Mammary epithelial cell (primary cell): ENCODE measurements at regions of chr1 and their contacts with region 1.

Region 1: DNA sequence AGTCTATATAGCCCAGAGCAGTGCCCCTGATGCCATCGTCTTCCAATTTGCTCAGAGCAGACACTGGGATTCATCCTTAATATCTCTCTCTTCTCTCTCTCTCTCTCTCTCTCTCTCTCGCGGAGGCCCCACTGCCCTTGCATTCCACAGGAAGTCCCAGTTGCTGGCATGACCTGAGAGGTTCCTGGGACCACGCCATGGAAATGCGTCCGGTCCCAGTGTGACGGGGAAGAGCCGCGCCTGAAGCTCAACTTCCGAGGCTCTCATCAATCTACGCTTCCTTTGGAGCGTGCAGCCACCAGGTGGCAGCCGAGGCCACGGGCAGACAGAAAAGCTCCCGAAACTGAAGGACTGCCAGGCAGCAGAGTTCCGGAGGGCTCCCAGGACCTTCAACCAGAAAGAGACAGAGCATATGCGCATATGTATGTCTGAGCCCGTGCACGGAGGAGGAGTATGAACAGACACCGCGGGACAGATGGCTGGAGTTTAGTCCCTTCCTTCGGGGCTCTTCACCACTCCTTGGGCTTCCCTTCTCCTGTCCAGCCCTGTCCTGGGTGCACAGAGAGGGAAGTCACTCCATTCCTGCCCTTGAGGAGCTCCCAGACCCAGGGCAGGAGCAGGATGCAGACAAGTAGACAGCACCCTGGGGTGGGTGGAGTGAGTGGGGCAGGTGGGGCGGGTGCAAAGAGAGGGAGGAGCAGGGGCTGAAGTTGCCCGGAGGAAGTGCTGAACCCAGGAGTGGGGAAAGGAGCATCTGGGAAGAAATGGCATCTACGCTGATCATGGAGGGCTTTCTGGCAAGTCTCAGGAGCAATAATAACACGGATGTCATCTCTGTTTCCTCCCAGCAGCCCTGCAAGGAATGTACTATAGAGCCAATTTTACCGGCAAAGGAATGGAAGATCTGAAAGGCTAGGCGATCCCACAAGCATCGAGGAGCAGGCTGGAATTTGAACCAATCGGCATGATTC is 10.5 kb downstream of the PDZK1IP1 start:
- DNase-seq: peak; percentile 91
- H3K4me3 ChIP-seq: peak overlapping the region; percentile 28 to 58 (median 44)
- H3K27ac ChIP-seq: peak overlapping the region; percentile 19
- H3K4me1 ChIP-seq: peaks cover 15% of the 10 kb centered on the region
- H3K27me3 ChIP-seq: no peaks in the 10 kb centered on the region
- CTCF ChIP-seq: peak; percentile 83 to 98

Region 2: GRCh38 chr1:46747683-46748288 is 431.5 kb before region 1 on chr1:
- CTCF ChIA-PET with region 1: no interaction called
- dilution Hi-C with region 1: no loop called
- in situ Hi-C with region 1: loop called in 1 of 2 experiments (anchors 25 kb)
- intact Hi-C with region 1: loop called (anchors 2 kb)
- DNase-seq: peak; percentile 65
- H3K4me3 ChIP-seq: no peak overlapping the region
- H3K27ac ChIP-seq: no peak overlapping the region
- H3K4me1 ChIP-seq: peaks cover 26% of the 10 kb centered on the region
- H3K27me3 ChIP-seq: no peaks in the 10 kb centered on the region
- CTCF ChIP-seq: peak; percentile 89 to 97

Region 3: DNA sequence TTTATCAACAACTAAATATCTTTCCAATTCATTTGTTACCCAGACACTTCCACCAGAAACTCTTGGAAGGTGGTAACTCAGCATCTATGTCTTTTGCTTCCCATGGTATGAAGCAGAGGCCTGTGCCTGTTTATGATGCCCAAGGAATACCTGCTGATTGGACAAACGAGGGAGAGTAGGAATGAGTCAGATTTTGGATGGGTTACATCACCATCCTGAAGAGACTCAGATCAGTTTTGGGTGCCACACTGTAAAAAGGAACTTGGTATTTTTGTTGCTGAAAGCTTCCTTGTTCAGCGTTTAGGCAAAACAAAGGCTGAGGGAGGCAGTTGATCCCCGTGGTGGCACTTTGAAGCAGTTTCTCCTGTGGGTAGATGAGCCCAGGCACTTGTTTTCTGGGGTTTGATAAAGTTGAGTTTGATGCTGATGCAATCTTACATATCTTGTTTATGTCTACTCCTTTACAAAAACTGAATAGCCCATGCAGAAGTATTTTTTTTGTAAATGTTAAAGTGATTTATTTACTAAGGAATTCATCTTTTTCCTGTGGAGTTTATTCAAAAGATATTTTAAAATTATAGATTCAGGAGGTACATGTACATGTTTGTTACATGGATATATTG is 182.5 kb before region 1 on chr1:
- CTCF ChIA-PET with region 1: no interaction called
- dilution Hi-C with region 1: no loop called
- in situ Hi-C with region 1: no loop called
- intact Hi-C with region 1: loop called (anchors 5 kb)
- DNase-seq: peak; percentile 32
- H3K4me3 ChIP-seq: no peak overlapping the region
- H3K27ac ChIP-seq: no peak overlapping the region
- H3K4me1 ChIP-seq: no peaks in the 10 kb centered on the region
- H3K27me3 ChIP-seq: no peaks in the 10 kb centered on the region
- CTCF ChIP-seq: no peak

Region 4: DNA sequence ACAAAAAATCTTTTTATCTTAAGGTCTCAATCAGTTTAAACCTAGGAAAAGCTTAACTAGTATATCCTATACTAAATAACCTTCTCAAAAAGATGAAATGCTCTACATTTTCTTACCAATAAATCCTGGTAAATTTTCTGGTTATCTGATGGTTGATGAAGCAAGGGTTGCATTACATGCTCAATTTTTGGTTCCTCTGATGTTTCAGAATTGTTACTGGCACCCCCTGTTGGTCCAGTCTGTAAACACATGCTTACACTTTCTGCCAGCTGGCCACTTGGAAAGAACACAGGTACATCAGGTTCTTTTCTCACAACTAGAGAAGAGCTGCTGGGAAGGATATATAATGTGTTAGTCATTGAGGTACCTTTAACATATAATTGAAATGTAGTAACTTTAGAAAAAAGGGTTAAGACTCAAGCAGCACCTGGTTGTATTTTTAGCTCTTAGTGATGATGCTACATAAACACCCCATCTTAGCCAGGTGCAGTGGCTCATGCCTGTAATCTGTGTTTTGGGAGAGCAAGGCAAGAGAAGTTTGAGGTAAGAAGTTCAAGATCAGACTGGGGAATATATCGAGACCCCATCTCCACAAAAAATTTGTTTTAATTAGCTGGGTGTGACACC is 83.6 kb after region 1 on chr1:
- CTCF ChIA-PET with region 1: interaction called, 18 read pairs
- dilution Hi-C with region 1: no loop called
- in situ Hi-C with region 1: no loop called
- intact Hi-C with region 1: loop called (anchors 1 kb)
- DNase-seq: peak; percentile 52
- H3K4me3 ChIP-seq: no peak overlapping the region
- H3K27ac ChIP-seq: no peak overlapping the region
- H3K4me1 ChIP-seq: no peaks in the 10 kb centered on the region
- H3K27me3 ChIP-seq: no peaks in the 10 kb centered on the region
- CTCF ChIP-seq: peak; percentile 74 to 77

Region 5: DNA sequence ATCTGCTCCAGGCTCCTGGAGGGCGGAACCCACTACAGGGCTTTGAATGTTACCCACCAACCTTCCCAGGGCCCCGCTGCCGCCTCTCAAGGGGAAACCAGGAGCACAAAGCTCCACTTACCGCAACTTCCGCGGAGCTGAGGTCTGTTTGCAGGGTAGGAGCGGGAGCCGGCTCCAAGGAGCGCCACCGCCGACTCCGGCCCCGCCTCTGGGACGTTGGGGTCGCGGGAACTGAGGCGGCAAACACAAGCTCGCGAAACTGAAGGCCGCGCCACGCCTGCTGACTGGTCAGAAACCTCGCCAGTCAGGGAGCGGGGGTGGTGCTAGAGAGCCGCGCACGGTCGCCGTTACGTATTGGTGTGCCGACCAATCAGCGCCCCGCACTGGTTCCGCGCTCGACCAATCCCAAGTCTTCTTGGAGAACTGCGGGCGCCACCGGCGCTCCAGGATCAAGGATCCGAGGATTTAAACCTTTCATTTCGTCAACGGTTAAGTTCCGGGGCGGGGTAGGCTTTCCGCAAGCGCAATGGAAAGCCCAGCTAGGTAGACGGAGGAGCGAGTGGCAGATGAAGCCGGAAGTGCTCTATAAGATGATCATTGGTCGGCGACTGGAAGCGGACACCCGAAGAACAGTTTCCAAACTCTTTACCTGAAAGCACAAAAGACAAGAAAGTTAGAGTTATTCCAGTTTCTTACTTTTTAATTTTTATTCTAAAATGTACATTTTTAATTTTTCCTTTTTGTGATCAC is 134.8 kb after region 1 on chr1 and contains the start of gene STIL:
- CTCF ChIA-PET with region 1: no interaction called
- dilution Hi-C with region 1: no loop called
- in situ Hi-C with region 1: no loop called
- intact Hi-C with region 1: loop called (anchors 5 kb)
- DNase-seq: peak; percentile 100
- H3K4me3 ChIP-seq: peak within 1 kb of the TSS; percentile 85 to 95 (median 90)
- H3K27ac ChIP-seq: peak within 1 kb of the TSS; percentile 95
- H3K4me1 ChIP-seq: peaks cover 3% of the 10 kb centered on the region
- H3K27me3 ChIP-seq: no peaks in the 10 kb centered on the region
- CTCF ChIP-seq: peak in 1 of 2 donors; percentile 1
- total RNA-seq, gene STIL: 8.0 to 17.9 TPM

Region 6: DNA sequence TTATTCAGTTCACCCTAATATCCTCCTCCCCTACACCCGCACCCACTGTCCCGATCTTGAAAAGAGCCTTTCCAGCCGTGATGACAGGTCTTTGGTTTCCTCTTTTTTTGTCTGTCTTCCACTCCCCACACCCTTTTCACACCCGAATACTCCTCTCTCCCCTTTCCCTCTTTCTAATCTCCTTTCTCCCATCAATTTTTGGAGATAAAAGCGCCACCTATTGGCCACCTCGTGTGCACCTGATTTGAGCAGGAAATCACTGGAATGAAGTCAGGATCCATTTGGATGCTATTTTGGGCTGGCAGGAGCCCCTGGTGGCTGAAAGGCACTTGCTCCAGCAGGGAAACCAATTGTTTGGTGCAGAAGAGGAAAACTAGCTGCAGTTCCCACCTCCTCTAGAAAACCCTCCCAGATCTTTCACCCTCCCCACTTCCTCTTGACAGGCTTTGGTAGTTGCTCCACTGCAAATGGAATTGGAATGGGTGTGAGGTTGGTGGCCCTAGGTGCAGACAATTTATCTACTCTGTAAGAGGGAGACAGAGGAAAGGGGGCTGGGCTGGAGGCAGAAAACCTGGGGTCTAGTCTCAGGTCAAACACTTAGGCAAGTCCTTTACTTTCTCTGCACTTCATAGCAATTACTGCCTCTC is 245.2 kb after region 1 on chr1:
- CTCF ChIA-PET with region 1: no interaction called
- dilution Hi-C with region 1: no loop called
- in situ Hi-C with region 1: loop called in 1 of 2 experiments (anchors 25 kb)
- intact Hi-C with region 1: no loop called
- DNase-seq: peak; percentile 48
- H3K4me3 ChIP-seq: no peak overlapping the region
- H3K27ac ChIP-seq: no peak overlapping the region
- H3K4me1 ChIP-seq: no peaks in the 10 kb centered on the region
- H3K27me3 ChIP-seq: no peaks in the 10 kb centered on the region
- CTCF ChIP-seq: peak; percentile 84 to 94

Region 7: GRCh38 chr1:47710329-47711071 is 531.2 kb after region 1 on chr1:
- CTCF ChIA-PET with region 1: no interaction called
- dilution Hi-C with region 1: no loop called
- in situ Hi-C with region 1: loop called in 1 of 2 experiments (anchors 25 kb)
- intact Hi-C with region 1: loop called (anchors 5 kb)
- DNase-seq: peak; percentile 41
- H3K4me3 ChIP-seq: no peak overlapping the region
- H3K27ac ChIP-seq: no peak overlapping the region
- H3K4me1 ChIP-seq: peaks cover 23% of the 10 kb centered on the region
- H3K27me3 ChIP-seq: peaks cover 29% of the 10 kb centered on the region
- CTCF ChIP-seq: peak; percentile 87 to 100